Heart left ventricle (tissue), 16 donors: ENCODE measurements at regions of chr1 and their contacts with region 1.

Region 1: DNA sequence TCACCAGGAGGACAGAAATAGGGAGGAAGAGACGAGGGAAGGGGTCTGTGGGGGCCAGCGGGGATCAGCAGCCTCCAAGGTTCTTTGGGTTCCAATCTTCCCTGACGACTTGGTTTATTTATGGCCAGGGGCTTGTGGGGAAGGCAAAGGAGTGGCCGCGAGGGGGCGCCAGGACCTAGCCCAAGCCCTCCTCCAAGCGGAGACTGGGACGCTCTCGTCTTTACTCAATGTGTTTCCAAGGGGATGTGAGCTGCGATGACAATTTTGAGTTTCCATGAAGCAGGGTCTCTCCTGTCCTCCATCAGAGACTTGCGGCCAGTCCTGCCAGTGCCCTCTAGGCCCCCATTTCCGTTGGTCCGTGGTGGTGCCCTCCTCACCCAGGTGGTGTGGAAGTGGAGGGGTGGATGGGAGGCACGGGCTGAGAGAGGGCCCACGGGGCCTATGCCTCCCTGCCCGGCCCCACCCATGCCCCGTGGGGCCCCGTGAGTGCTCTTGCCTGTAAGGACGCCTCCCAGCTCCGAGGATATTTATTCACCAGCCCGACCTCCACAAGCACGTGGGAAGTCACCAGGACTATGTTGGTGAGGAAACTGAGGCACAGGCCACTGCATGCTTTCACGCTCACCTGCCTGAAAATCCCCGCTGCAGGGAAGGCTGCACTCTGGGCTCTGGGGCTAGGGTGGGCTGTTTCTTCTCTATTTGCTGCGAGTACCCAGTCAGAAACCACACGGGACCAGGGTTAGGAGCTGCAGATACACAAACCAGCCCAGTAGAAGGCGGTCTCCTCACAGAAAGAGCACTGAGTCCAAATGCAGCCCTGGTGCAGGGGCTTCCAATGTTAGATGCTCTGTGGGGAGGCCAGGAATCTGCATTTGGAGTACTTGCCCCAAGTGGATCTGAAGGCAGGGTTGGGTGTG is 26.5 kb downstream of the DMRTB1 start:
- DNase-seq: peak; percentile 68 to 84 (median 77)
- ATAC-seq: peak; percentile 73 to 94 (median 88)
- H3K4me3 ChIP-seq: no peak overlapping the region
- H3K27ac ChIP-seq: no peak overlapping the region
- H3K4me1 ChIP-seq: peaks cover 0 to 4% (median 0%) of the 10 kb centered on the region in 12 donors
- H3K27me3 ChIP-seq: peaks cover 3 to 65% (median 11%) of the 10 kb centered on the region in 9 donors
- CTCF ChIP-seq: peak; percentile 73 to 91 (median 82)
- POLR2A ChIP-seq: no peak

Region 2: GRCh38 chr1:53104289-53104913 is 381.3 kb before region 1 on chr1:
- intact Hi-C with region 1: no loop called
- DNase-seq: no peak
- ATAC-seq: peak in 1 of 4 donors; percentile 58
- H3K4me3 ChIP-seq: no peak overlapping the region
- H3K27ac ChIP-seq: peak overlapping the region in 4 of 12 donors; percentile 10 to 53 (median 30)
- H3K4me1 ChIP-seq: peaks cover 0 to 19% (median 8%) of the 10 kb centered on the region in 12 donors
- H3K27me3 ChIP-seq: no peaks in the 10 kb centered on the region
- CTCF ChIP-seq: no peak
- POLR2A ChIP-seq: no peak

Region 3: GRCh38 chr1:53153752-53154151 is 332.0 kb before region 1 on chr1:
- intact Hi-C with region 1: no loop called
- DNase-seq: no peak
- ATAC-seq: no peak
- H3K4me3 ChIP-seq: no peak overlapping the region
- H3K27ac ChIP-seq: no peak overlapping the region
- H3K4me1 ChIP-seq: no peaks in the 10 kb centered on the region
- H3K27me3 ChIP-seq: no peaks in the 10 kb centered on the region
- CTCF ChIP-seq: no peak
- POLR2A ChIP-seq: no peak

Region 4: DNA sequence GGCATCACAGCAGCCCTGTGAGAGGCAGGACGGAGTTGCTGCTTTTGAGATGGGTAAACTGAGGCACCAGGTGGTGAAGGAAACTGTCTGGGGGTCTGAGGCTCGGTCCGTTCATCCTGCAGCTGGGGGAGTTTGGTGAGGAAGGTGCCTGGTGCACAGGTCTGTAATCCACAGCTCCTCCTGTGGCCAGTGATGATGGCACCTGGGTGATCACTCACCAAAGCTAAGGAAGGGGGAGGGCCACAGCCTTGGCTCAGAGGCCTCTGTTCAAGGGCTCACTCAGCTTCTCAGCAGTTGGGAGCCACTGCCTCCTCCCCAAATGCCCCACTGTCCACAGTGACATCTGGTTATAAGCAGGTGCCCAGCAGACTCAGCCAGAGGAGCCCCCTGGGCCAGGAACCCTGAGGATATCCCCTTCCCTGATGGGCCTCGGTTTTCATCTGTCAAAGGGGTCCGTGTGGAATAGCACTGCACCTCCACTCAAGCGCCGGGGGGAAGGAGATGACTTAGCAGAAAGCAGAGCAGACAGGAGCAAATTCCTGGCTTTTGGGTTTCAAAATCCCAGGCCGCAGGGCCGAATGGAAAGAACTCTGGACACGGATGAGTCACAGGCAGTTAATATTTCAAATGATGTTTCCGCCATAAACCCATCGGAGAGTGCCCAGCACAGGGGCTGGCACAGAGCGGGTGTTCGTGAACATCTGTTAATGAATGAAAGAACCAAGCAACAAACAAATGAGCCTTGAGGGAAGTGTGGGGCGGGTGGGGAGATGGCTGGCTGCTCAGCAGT is 56.2 kb after region 1 on chr1:
- intact Hi-C with region 1: no loop called
- DNase-seq: peak in 3 of 5 donors; percentile 6 to 37 (median 8)
- ATAC-seq: no peak
- H3K4me3 ChIP-seq: no peak overlapping the region
- H3K27ac ChIP-seq: peak overlapping the region in 1 of 12 donors; percentile 38
- H3K4me1 ChIP-seq: no peaks in the 10 kb centered on the region
- H3K27me3 ChIP-seq: peaks cover 0 to 10% (median 0%) of the 10 kb centered on the region in 9 donors
- CTCF ChIP-seq: no peak
- POLR2A ChIP-seq: no peak

Region 5: GRCh38 chr1:53592521-53592982 is 106.8 kb after region 1 on chr1:
- intact Hi-C with region 1: loop called in 3 of 10 experiments (anchors 5 to 10 kb)
- DNase-seq: peak in 3 of 5 donors; percentile 35 to 71 (median 43)
- ATAC-seq: peak; percentile 34 to 45 (median 38)
- H3K4me3 ChIP-seq: no peak overlapping the region
- H3K27ac ChIP-seq: peak overlapping the region in 5 of 12 donors; percentile 54 to 70 (median 63)
- H3K4me1 ChIP-seq: peaks cover 0 to 28% (median 0%) of the 10 kb centered on the region in 12 donors
- H3K27me3 ChIP-seq: peaks cover 0 to 3% (median 0%) of the 10 kb centered on the region in 9 donors
- CTCF ChIP-seq: no peak
- POLR2A ChIP-seq: no peak

Region 6: DNA sequence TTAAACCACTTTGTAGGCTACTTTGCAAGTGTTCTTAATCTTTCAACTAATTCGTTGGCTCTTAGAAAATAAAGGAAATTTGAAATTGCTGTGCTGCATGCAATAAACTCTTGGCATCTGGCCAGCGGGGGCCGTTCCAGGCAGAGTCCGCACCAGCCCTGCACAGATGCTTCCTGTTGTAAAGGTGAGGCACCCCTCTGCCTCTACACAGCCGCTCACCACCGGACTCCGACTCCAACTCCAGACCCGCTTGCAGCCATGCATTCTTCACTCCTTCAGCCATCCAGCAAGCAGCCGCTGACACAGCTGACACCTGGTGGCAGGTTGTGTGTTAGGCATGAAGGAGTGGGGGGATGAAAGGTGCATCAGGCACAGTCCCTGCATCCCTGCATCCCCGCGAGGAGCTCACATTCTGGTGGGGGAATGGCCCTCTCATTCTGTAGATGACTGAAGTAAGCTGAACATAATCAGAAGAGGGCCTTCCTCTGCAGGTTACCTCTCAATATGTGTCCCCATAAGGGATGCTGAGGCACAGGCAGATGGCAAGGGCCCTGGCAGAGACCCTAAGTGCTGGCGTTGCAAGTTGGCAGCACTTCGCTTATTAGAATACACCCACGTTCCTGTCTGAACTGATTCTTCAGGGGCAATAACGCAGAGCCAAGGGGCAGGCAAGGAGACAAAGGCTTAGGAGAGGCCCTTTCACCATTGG is 196.4 kb after region 1 on chr1:
- intact Hi-C with region 1: loop called in 8 of 10 experiments (anchors 5 to 10 kb)
- DNase-seq: peak in 3 of 5 donors; percentile 24 to 41 (median 40)
- ATAC-seq: peak in 1 of 4 donors; percentile 31
- H3K4me3 ChIP-seq: no peak overlapping the region
- H3K27ac ChIP-seq: no peak overlapping the region
- H3K4me1 ChIP-seq: peaks cover 0 to 22% (median 0%) of the 10 kb centered on the region in 12 donors
- H3K27me3 ChIP-seq: peaks cover 0 to 76% (median 14%) of the 10 kb centered on the region in 9 donors
- CTCF ChIP-seq: peak in 8 of 12 donors; percentile 12 to 34 (median 25)
- POLR2A ChIP-seq: no peak

Region 7: GRCh38 chr1:53754484-53755312 is 269.0 kb after region 1 on chr1:
- intact Hi-C with region 1: loop called (anchors 1 to 5 kb)
- DNase-seq: peak in 1 of 5 donors; percentile 13
- ATAC-seq: peak in 2 of 4 donors; percentile 48 to 49
- H3K4me3 ChIP-seq: no peak overlapping the region
- H3K27ac ChIP-seq: no peak overlapping the region
- H3K4me1 ChIP-seq: no peaks in the 10 kb centered on the region
- H3K27me3 ChIP-seq: no peaks in the 10 kb centered on the region
- CTCF ChIP-seq: peak; percentile 48 to 77 (median 66)
- POLR2A ChIP-seq: no peak